CD4-positive, alpha-beta memory T cell (primary cell): ENCODE measurements at regions of chr9 and their contacts with region 1.

Region 1: GRCh38 chr9:131046581-131047202 is 37.7 kb downstream of the LAMC3 start:
- DNase-seq: peak; percentile 52 to 74 (median 64)
- H3K4me3 ChIP-seq: no peak overlapping the region
- H3K4me3 Mint-ChIP-seq: peak overlapping the region in 5 of 8 donors; percentile 14 to 61 (median 33)
- H3K27ac ChIP-seq: no peak overlapping the region
- H3K27ac Mint-ChIP-seq: no peak overlapping the region
- H3K4me1 ChIP-seq: no peaks in the 10 kb centered on the region
- H3K4me1 Mint-ChIP-seq: peaks cover 0 to 5% (median 2%) of the 10 kb centered on the region in 4 donors
- H3K27me3 ChIP-seq: no peaks in the 10 kb centered on the region
- H3K27me3 Mint-ChIP-seq: peaks cover 7 to 10% of the 10 kb centered on the region in 2 donors

Region 2: DNA sequence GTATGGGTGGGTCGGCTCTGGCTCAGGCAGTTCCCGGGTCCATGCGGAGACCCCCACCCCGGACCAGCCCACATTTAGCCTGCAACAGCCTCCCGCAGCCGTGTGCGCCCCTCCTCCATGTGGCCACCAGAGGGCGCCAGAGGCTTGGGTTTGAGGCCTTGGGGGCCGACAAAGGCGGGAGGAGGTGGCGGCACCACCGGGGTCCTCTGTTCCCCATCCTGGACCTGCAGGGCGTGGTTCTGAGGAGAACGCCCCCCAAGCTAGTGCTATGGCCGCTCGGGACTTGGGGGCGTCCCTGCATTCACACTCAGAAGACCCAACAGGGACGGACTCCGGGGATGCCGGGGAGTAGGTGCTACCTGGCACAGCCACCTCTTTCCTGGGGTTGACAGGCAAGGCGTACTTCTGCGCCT is 585.5 kb before region 1 on chr9:
- CTCF ChIA-PET with region 1: interaction called, 7 read pairs
- POLR2A ChIA-PET with region 1: no interaction called
- intact Hi-C with region 1: loop called (anchors 5 kb)
- DNase-seq: peak; percentile 53 to 68 (median 58)
- H3K4me3 ChIP-seq: no peak overlapping the region
- H3K4me3 Mint-ChIP-seq: no peak overlapping the region
- H3K27ac ChIP-seq: no peak overlapping the region
- H3K27ac Mint-ChIP-seq: no peak overlapping the region
- H3K4me1 ChIP-seq: no peaks in the 10 kb centered on the region
- H3K4me1 Mint-ChIP-seq: no peaks in the 10 kb centered on the region
- H3K27me3 ChIP-seq: no peaks in the 10 kb centered on the region
- H3K27me3 Mint-ChIP-seq: peaks cover 7 to 9% of the 10 kb centered on the region in 2 donors

Region 3: GRCh38 chr9:130701056-130702022 is 345.4 kb before region 1 on chr9:
- CTCF ChIA-PET with region 1: interaction called, 16 read pairs
- POLR2A ChIA-PET with region 1: interaction called, 3 read pairs
- intact Hi-C with region 1: no loop called
- DNase-seq: peak; percentile 57 to 68 (median 59)
- H3K4me3 ChIP-seq: no peak overlapping the region
- H3K4me3 Mint-ChIP-seq: no peak overlapping the region
- H3K27ac ChIP-seq: no peak overlapping the region
- H3K27ac Mint-ChIP-seq: no peak overlapping the region
- H3K4me1 ChIP-seq: peaks cover 3% of the 10 kb centered on the region
- H3K4me1 Mint-ChIP-seq: peaks cover 11 to 21% (median 14%) of the 10 kb centered on the region in 4 donors
- H3K27me3 ChIP-seq: no peaks in the 10 kb centered on the region
- H3K27me3 Mint-ChIP-seq: no peaks in the 10 kb centered on the region

Region 4: DNA sequence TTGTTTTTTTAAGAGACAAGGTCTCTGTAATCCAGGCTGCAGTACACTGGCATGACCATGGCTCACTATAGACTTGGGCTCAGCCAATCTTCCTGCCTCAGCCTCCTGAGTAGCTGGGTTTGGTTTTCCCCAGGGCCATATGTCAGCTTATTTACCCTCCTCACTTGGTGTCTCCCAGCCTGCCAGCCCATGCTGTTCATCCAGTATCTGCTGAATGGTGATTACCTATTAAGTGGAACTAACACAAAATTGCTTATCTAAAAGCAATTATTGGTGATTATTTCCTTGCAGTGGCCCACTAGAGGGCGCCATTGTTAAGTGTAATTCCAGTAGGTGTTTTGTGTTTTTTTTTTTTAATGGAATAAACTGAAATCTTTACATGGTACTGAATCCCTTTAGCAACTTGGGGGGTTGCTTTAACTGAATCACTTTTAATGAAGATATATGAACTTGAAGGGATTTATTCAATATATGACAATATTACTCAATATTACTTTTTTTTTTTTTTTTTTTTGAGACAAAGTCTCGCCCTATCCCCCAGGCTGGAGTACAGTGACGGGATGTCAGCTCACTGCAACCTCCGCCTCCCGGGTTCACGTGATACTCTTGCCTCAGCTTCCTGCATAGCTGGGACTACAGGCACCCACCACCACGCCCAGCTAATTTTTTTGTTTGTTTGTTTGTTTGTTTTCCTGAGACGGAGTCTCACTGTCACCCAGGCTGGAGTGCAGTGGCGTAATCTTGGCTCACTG is 339.3 kb before region 1 on chr9:
- CTCF ChIA-PET with region 1: interaction called, 16 read pairs
- POLR2A ChIA-PET with region 1: no interaction called
- intact Hi-C with region 1: no loop called
- DNase-seq: peak; percentile 66 to 72 (median 67)
- H3K4me3 ChIP-seq: no peak overlapping the region
- H3K4me3 Mint-ChIP-seq: no peak overlapping the region
- H3K27ac ChIP-seq: no peak overlapping the region
- H3K27ac Mint-ChIP-seq: peak overlapping the region in 5 of 7 donors; percentile 6 to 79 (median 60)
- H3K4me1 ChIP-seq: peaks cover 5% of the 10 kb centered on the region
- H3K4me1 Mint-ChIP-seq: peaks cover under 1 to 7% (median 4%) of the 10 kb centered on the region in 4 donors
- H3K27me3 ChIP-seq: no peaks in the 10 kb centered on the region
- H3K27me3 Mint-ChIP-seq: no peaks in the 10 kb centered on the region